Sciatic nerve (tissue), 2 donors: ENCODE measurements at regions of chr1 and their contacts with region 1.

Region 1: DNA sequence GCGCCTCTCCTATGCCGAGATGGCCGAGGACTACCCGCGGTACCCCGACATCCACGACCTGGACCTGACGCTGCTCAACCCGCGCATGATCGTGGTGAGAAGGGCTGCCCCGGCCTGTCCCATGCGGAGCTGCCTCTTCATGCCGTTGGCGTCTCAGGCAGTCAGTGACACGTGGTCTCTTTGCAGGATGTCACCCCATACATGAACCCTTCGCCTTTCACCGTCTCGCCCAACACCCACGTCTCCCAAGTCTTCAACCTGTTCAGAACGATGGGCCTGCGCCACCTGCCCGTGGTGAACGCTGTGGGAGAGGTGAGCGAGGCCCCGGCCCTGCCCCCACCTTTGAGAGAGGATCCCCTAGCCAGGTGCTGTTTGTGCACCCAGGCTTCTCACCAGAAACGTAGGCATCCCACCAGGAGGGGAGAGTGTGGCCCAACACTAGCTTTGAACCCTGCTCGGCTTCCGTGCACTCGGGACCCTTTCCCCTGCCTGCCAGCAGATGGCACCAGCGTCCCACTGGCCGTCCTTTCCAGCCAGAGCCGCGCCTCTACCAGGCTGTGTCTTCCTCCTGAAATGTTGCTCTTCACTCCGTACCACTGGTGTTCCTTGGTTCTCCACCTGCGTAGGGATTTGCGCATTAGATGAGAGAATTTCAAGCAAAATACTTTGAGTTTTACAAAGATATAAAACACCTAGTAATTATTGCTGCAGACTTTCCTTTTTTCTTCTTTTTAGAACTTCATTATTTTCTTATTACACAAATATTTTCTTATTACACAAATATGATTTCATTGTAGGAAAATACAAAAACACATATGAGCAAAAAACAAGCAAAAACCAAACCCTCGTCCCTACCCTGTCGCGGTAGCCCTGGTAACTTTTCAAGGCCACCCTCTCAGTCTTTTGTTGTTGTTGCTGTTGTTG is 9.0 kb downstream of the NPPA start:
- DNase-seq: peak; percentile 87
- ATAC-seq: peak; percentile 87

Region 2: GRCh38 chr1:11907275-11908094 is 68.9 kb after region 1 on chr1:
- intact Hi-C with region 1: loop called (anchors 5 kb)
- DNase-seq: peak; percentile 93
- ATAC-seq: peak; percentile 93

Region 3: DNA sequence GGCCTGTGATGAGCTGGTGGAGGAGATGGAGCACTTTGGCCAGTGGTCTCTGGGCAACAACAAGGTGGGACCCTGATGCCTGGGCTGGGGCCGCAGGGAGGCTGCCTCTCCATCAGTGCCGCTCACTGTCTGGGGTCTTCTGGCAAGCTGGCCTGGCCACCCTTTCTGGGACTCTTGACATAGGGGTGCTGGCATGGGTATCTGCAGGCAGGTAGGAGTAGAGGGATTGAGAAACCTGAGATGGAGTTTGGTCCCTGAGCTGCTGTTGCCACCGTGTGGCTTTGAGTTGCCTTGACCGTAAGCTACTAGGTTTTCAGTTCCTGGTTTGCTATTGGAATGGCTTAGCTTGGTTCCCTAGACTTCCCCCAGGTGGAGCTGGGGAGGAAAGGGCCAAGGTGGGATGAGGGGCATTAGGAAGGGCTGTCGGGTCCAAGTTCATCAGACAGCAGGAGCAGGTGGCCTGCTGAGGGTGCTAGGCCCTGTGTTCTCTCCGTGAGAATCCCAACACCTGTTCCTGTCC is 128.5 kb after region 1 on chr1:
- intact Hi-C with region 1: loop called (anchors 10 kb)
- DNase-seq: no peak
- ATAC-seq: peak; percentile 45